ENCODE measurements at regions of chr7 and their contacts with region 1.

Region 1: GRCh38 chr7:116525913-116526861 is 1.4 kb downstream of the CAV1 start:
- DNase-seq: no peak
- H3K4me3 ChIP-seq: peak overlapping the region; percentile 73
- H3K27me3 ChIP-seq: no peaks in the 10 kb centered on the region
- CTCF ChIP-seq: peak; percentile 58

Region 2: GRCh38 chr7:116258734-116259133 is 267.5 kb before region 1 on chr7:
- CTCF ChIA-PET with region 1: interaction called, 56 read pairs
- POLR2A ChIA-PET with region 1: interaction called, 11 read pairs
- DNase-seq: no peak
- H3K4me3 ChIP-seq: no peak overlapping the region
- H3K27me3 ChIP-seq: no peaks in the 10 kb centered on the region
- CTCF ChIP-seq: peak; percentile 69

Region 3: GRCh38 chr7:116328161-116328560 is 198.0 kb before region 1 on chr7:
- CTCF ChIA-PET with region 1: interaction called, 6 read pairs
- POLR2A ChIA-PET with region 1: interaction called, 12 read pairs
- DNase-seq: peak; percentile 30
- H3K4me3 ChIP-seq: no peak overlapping the region
- H3K27me3 ChIP-seq: no peaks in the 10 kb centered on the region
- CTCF ChIP-seq: no peak

Region 4: GRCh38 chr7:116443101-116443523 is 83.1 kb before region 1 on chr7:
- CTCF ChIA-PET with region 1: interaction called, 25 read pairs
- POLR2A ChIA-PET with region 1: interaction called, 3 read pairs
- DNase-seq: peak; percentile 81
- H3K4me3 ChIP-seq: no peak overlapping the region
- H3K27me3 ChIP-seq: no peaks in the 10 kb centered on the region
- CTCF ChIP-seq: no peak

Region 5: GRCh38 chr7:116464375-116464774 is 61.8 kb before region 1 on chr7:
- CTCF ChIA-PET with region 1: no interaction called
- POLR2A ChIA-PET with region 1: no interaction called
- DNase-seq: no peak
- H3K4me3 ChIP-seq: no peak overlapping the region
- H3K27me3 ChIP-seq: no peaks in the 10 kb centered on the region
- CTCF ChIP-seq: no peak

Region 6: GRCh38 chr7:116543664-116544063 is 17.5 kb after region 1 on chr7:
- CTCF ChIA-PET with region 1: interaction called, 22 read pairs
- POLR2A ChIA-PET with region 1: interaction called, 3 read pairs
- DNase-seq: peak; percentile 65
- H3K4me3 ChIP-seq: no peak overlapping the region
- H3K27me3 ChIP-seq: no peaks in the 10 kb centered on the region
- CTCF ChIP-seq: no peak

Region 7: GRCh38 chr7:116582806-116583444 is 56.7 kb after region 1 on chr7:
- CTCF ChIA-PET with region 1: interaction called, 26 read pairs
- POLR2A ChIA-PET with region 1: interaction called, 9 read pairs
- DNase-seq: peak; percentile 96
- H3K4me3 ChIP-seq: no peak overlapping the region
- H3K27me3 ChIP-seq: no peaks in the 10 kb centered on the region
- CTCF ChIP-seq: no peak

Measured in BJ (cell line).